ENCODE measurements at regions of chr2 and their contacts with region 1.

Region 1: GRCh38 chr2:168687314-168687713 is 115.1 kb upstream of the NOSTRIN start:
- DNase-seq: no peak
- ATAC-seq: peak in 3 of 4 donors; percentile 36 to 53 (median 50)
- H3K4me3 ChIP-seq: no peak overlapping the region
- H3K27ac ChIP-seq: no peak overlapping the region
- H3K4me1 ChIP-seq: peaks cover 0 to 28% (median 7%) of the 10 kb centered on the region in 12 donors
- H3K27me3 ChIP-seq: no peaks in the 10 kb centered on the region
- CTCF ChIP-seq: peak in 10 of 12 donors; percentile 6 to 55 (median 38)
- POLR2A ChIP-seq: no peak

Region 2: DNA sequence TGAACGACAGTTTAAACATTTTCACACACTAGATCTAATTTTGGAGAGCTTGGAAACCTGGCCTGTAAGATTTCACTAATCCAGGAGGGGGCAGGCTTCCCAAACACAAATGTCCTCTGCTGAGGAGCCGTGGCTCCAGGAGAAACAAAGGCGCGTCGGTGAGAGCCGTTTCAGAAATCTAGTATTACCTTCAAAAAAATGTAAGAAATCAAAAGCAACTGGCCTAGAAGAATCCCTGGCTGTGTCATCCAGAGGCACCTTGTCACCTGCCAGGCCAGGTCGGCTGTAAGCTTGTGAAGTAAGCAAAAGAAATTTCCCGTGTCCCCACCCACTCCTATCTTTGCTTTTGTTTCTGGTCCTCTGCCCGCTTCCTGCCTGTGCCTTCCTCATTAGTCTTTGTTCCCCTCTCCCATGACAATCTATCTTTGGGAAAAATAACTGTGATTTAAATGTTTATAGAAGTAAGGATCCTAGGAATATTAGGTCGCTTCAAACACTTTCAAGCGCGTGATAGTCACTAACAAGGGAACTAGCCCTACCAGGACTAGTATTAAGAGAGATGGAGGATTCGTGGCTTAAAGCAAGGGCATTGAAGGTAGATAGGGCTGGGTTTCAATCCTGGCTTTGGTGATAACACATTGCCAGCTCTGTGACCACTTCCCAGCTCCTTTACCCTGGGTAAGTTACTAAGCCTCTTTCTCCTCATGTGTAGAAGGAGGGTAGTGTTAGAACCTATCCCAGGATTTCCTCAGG is 340.4 kb before region 1 on chr2:
- intact Hi-C with region 1: loop called in 5 of 10 experiments (anchors 5 kb)
- DNase-seq: peak; percentile 55 to 71 (median 68)
- ATAC-seq: peak; percentile 72 to 91 (median 84)
- H3K4me3 ChIP-seq: peak overlapping the region in 11 of 12 donors; percentile 16 to 64 (median 52)
- H3K27ac ChIP-seq: peak overlapping the region in 5 of 12 donors; percentile 9 to 64 (median 27)
- H3K4me1 ChIP-seq: peaks cover 0 to 9% (median 0%) of the 10 kb centered on the region in 12 donors
- H3K27me3 ChIP-seq: peaks cover 0 to under 1% (median 0%) of the 10 kb centered on the region in 9 donors
- CTCF ChIP-seq: peak; percentile 72 to 87 (median 80)
- POLR2A ChIP-seq: no peak

Region 3: GRCh38 chr2:168443818-168444217 is 243.5 kb before region 1 on chr2:
- intact Hi-C with region 1: loop called in 3 of 10 experiments (anchors 5 to 10 kb)
- DNase-seq: no peak
- ATAC-seq: peak in 3 of 4 donors; percentile 42 to 68 (median 58)
- H3K4me3 ChIP-seq: no peak overlapping the region
- H3K27ac ChIP-seq: no peak overlapping the region
- H3K4me1 ChIP-seq: peaks cover 0 to 7% (median 0%) of the 10 kb centered on the region in 12 donors
- H3K27me3 ChIP-seq: no peaks in the 10 kb centered on the region
- CTCF ChIP-seq: peak in 9 of 12 donors; percentile 10 to 35 (median 17)
- POLR2A ChIP-seq: no peak

Region 4: DNA sequence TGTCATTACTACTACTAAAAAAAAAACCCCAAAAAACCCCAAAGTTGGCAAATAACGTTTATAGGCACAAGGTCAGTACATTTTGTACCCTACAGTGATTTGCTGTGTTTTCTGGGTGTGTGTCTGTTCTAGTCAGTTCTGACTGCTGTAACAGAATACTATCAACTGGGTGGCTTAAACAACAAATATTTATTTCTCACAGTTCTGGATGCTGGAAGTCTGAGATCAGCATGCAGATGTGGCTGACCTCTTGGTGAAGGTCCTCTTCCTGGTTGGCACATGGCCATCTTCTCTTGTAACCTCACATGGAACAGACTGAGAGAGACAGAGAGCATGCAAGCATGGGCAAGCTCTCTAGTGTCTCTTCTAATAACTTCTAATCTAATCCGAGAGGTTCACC is 128.1 kb before region 1 on chr2:
- intact Hi-C with region 1: loop called in 1 of 10 experiments (anchors 5 kb)
- DNase-seq: peak in 2 of 5 donors; percentile 35 to 46
- ATAC-seq: peak; percentile 41 to 62 (median 55)
- H3K4me3 ChIP-seq: no peak overlapping the region
- H3K27ac ChIP-seq: peak overlapping the region in 2 of 12 donors; percentile 16 to 17
- H3K4me1 ChIP-seq: peaks cover 0 to 23% (median 13%) of the 10 kb centered on the region in 12 donors
- H3K27me3 ChIP-seq: no peaks in the 10 kb centered on the region
- CTCF ChIP-seq: no peak
- POLR2A ChIP-seq: no peak

Region 5: DNA sequence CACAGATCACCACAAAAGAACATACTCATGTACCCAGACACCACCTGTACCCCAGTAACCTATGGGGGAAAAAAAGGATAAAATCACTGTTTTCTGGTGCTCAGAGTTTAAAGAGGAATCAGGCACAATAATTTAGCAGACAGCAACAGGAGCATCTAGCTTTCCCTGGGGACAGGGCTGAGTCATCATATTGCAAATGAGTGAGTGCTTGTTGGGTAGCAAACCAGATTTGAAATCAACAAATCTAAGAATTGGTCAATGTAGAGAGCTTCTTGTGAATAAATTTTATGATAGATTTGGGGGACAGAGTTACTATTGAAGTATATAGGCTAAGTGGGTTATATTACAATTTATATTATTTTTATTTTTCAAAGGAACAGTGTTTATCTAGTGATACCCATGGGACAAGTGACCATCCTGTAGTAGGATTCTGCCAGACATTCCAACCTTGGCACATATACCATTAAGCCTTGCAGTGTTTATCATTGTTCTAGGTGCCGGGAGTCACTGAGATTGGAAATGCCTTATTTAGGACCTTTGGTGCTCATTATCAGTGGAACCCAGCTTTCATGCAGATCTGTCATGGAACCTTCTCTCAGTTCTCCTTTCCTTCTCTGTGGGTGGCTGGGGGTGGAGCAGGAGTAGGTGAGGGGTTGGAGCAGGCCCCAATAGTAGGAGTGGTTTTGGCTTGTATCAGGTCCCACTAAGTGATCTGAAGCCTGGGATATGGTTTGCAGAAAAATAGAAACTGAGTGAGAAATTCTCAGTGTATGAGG is 114.0 kb before region 1 on chr2:
- intact Hi-C with region 1: loop called in 1 of 10 experiments (anchors 10 kb)
- DNase-seq: no peak
- ATAC-seq: no peak
- H3K4me3 ChIP-seq: no peak overlapping the region
- H3K27ac ChIP-seq: no peak overlapping the region
- H3K4me1 ChIP-seq: peaks cover 0 to 54% (median 21%) of the 10 kb centered on the region in 12 donors
- H3K27me3 ChIP-seq: no peaks in the 10 kb centered on the region
- CTCF ChIP-seq: no peak
- POLR2A ChIP-seq: no peak

Region 6: GRCh38 chr2:168635065-168635577 is 52.2 kb before region 1 on chr2:
- intact Hi-C with region 1: loop called in 2 of 10 experiments (anchors 5 kb)
- DNase-seq: peak; percentile 60 to 84 (median 72)
- ATAC-seq: peak; percentile 22 to 65 (median 38)
- H3K4me3 ChIP-seq: no peak overlapping the region
- H3K27ac ChIP-seq: peak overlapping the region in 9 of 12 donors; percentile 16 to 92 (median 82)
- H3K4me1 ChIP-seq: peaks cover 0 to 71% (median 45%) of the 10 kb centered on the region in 12 donors
- H3K27me3 ChIP-seq: no peaks in the 10 kb centered on the region
- CTCF ChIP-seq: no peak
- POLR2A ChIP-seq: no peak

Region 7: DNA sequence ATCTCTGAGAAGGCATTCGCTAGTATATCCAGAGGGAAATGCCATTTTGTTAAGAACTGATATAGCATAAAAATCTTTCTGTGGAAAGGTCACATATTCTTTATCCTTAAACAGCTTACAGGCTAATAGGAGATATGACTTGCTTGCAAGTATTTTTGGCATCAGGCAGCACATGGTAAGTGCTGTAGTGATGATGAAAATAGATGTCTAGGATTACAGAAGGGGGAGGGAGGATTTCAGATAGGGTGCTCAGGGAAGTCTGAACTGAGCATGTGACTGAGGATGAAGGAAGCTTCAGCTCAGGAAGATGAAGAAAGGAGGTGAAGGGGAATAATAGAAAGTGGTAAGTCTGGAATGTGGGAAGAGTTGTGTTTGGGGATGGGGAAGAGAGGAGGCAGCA is 43.3 kb before region 1 on chr2:
- intact Hi-C with region 1: loop called in 2 of 10 experiments (anchors 5 kb)
- DNase-seq: peak in 1 of 5 donors; percentile 22
- ATAC-seq: peak; percentile 52 to 82 (median 66)
- H3K4me3 ChIP-seq: peak overlapping the region in 1 of 12 donors; percentile 16
- H3K27ac ChIP-seq: peak overlapping the region; percentile 36 to 85 (median 64)
- H3K4me1 ChIP-seq: peaks cover 0 to 43% (median 18%) of the 10 kb centered on the region in 12 donors
- H3K27me3 ChIP-seq: no peaks in the 10 kb centered on the region
- CTCF ChIP-seq: no peak
- POLR2A ChIP-seq: no peak

Measured in heart left ventricle (tissue), 16 donors.